RWPE1 (cell line): ENCODE measurements at regions of chr1 and their contacts with region 1.

Region 1: GRCh38 chr1:201999625-202000238 is 10.7 kb upstream of the ELF3 start:
- DNase-seq: peak; percentile 78
- H3K27ac ChIP-seq: no peak overlapping the region
- CTCF ChIP-seq: peak; percentile 63

Region 2: GRCh38 chr1:201964261-201964660 is 35.5 kb before region 1 on chr1:
- CTCF ChIA-PET with region 1: no interaction called
- POLR2A ChIA-PET with region 1: no interaction called
- DNase-seq: no peak
- H3K27ac ChIP-seq: no peak overlapping the region
- CTCF ChIP-seq: no peak

Region 3: GRCh38 chr1:201989354-201990128 is 10.2 kb before region 1 on chr1:
- CTCF ChIA-PET with region 1: interaction called, 28 read pairs
- POLR2A ChIA-PET with region 1: no interaction called
- DNase-seq: no peak
- H3K27ac ChIP-seq: peak overlapping the region; percentile 43
- CTCF ChIP-seq: no peak

Region 4: DNA sequence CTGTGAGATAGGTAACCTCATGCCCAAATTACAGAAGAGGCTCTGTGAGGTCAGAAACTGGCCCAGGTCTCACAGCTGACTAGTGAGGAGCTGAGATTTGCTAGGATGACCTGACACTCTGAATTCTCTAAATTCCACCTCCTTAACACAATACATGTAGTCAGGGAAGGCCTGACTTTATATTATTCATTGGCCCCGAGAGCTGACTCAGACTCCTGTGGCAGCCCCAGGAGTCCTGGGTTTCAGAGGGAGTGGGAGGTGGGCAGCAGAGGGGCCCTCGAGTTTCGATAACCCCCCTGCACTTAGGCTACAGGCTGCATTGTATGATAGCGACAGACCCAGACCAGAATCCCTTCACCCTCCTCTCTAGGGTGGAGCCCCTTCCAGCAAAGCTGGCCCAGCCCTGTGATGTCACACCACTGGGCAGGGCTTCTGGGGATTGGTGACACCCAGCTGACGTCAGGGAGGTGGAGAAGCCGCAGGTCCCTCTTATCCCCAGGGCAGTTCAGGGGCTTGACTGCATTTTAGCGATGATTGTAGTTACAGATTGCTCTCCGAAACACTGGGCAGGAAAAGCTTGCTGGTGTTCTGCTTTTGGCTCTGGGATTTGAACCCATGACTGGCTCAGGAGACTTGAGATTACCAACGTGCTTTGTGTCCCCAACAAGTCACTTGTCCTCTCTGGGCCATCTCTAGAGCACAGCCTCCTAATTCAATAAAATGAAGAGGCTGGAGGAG is 106.0 kb after region 1 on chr1:
- CTCF ChIA-PET with region 1: interaction called, 12 read pairs
- POLR2A ChIA-PET with region 1: no interaction called
- DNase-seq: peak; percentile 73
- H3K27ac ChIP-seq: peak overlapping the region; percentile 2; the same call in 1 of the 2 replicates
- CTCF ChIP-seq: no peak

Region 5: DNA sequence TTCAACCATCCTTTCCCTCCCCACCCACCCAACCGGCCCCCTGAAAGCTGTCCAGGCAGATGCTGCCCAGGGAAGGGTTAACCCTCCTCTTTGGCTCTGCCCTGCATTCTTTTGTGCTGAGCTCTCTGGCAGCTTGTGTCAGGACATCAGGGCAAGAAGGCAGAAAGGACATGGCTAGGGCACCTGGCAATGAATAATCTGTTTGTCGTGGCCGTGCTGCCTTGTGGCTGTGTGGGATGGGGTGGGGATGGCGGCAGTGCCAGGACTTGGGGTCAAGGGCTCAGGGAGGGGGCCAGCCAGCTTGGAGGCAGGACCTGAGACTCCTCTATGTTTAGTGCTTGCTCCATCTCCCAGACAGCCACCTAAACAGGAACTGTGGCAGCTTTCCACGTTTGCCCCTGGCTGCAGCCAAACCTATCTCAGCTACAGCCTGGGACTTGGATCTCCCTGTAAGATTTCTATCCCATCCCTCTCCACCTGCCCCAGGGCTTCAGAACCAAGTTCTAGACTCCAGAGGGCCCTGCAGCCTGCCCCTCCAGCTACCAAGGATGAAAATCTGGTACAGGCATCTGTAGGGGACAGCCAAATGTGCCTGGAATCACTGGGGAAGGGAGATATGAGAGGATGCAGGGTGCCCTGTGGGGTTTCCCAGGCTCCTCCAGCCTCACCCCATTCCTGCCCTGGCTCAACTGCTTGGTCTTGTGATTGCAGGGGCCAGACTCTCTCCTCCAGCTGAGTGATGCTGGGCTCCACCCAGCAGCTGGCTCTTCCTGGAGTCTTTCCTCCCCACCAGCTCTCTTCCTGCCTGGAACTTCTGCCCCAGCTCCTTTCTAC is 113.3 kb after region 1 on chr1:
- CTCF ChIA-PET with region 1: interaction called, 114 read pairs
- POLR2A ChIA-PET with region 1: no interaction called
- DNase-seq: no peak
- H3K27ac ChIP-seq: peak overlapping the region; percentile 72
- CTCF ChIP-seq: no peak